Motor neuron (in vitro differentiated cells): ENCODE measurements at regions of chr6 and their contacts with region 1.

Region 1: DNA sequence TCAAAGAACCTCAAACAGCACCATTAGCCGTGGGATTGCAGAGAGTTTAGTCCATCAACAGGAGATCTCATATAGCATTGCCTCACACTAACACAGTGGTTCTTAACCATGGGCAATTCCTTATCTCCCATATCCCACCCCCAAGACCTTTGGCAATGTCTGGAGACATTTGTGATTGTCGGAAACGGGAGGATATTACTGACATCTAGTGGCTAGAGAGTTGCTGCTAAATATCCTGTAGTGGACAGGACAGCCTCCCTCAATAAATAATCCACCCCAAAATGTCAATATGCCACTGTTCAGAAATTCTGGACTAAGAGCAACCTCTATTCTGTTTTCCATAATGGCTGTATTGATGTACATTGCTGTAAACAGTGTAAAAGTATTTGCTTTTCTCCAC is 210.1 kb upstream of the CCN2 start:
- ATAC-seq: peak in 4 of 8 experiments; percentile 41 to 79 (median 75)
- H3K4me3 ChIP-seq: no peak overlapping the region
- H3K27ac ChIP-seq: no peak overlapping the region
- H3K4me1 ChIP-seq: no peaks in the 10 kb centered on the region

Region 2: GRCh38 chr6:131949909-131950766 is 211.1 kb before region 1 on chr6:
- in situ Hi-C with region 1: loop called in 1 of 9 experiments (anchors 10 kb)
- ATAC-seq: peak; percentile 27 to 78 (median 70)
- H3K4me3 ChIP-seq: peak overlapping the region; percentile 47 to 77 (median 56)
- H3K27ac ChIP-seq: peak overlapping the region in 1 of 2 donors; percentile 38
- H3K4me1 ChIP-seq: peaks cover 19 to 36% of the 10 kb centered on the region in 2 donors

Region 3: GRCh38 chr6:131995917-131996316 is 165.4 kb before region 1 on chr6:
- in situ Hi-C with region 1: no loop called
- ATAC-seq: peak in 4 of 8 experiments; percentile 27 to 93 (median 66)
- H3K4me3 ChIP-seq: no peak overlapping the region
- H3K27ac ChIP-seq: no peak overlapping the region
- H3K4me1 ChIP-seq: no peaks in the 10 kb centered on the region